ENCODE measurements at regions of chr10 and their contacts with region 1.

Region 1: DNA sequence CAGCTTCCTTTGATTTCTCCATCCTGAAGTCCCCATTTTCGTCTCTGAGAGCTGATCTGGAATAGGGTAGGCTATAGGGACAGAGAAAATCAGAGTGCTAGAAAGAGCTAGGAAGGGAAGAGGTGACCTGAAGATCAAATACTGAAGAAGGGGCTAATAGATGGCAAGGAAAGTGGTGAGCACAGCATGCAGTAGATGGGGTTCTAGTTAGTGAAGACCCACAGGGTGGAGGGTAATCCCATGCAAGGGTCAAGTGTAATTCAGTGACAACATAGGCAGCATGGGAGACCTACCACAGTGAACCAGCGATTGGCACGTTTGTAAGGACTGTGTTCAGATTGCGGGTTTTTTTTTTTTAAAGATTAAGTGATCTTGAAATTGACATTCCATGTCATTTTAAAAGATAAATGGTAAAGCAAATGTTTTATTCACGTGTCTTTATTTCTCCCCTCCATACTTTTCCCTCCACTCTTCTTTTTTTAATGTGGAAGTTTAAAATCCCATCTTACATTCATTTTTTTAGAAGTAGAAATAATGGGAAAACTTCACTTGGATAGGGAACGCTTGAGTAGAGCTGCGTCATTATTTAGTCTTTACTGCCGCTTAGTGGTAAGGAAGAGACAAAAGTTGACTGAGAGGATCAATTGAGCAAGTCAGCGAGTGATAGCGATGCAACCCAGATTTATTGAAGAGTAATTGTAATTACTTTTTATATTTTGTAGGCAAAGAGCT is 21.0 kb upstream of the ABI1 start:
- DNase-seq: no peak
- H3K4me3 ChIP-seq: no peak overlapping the region
- H3K27me3 ChIP-seq: no peaks in the 10 kb centered on the region
- CTCF ChIP-seq: peak; percentile 74

Region 2: DNA sequence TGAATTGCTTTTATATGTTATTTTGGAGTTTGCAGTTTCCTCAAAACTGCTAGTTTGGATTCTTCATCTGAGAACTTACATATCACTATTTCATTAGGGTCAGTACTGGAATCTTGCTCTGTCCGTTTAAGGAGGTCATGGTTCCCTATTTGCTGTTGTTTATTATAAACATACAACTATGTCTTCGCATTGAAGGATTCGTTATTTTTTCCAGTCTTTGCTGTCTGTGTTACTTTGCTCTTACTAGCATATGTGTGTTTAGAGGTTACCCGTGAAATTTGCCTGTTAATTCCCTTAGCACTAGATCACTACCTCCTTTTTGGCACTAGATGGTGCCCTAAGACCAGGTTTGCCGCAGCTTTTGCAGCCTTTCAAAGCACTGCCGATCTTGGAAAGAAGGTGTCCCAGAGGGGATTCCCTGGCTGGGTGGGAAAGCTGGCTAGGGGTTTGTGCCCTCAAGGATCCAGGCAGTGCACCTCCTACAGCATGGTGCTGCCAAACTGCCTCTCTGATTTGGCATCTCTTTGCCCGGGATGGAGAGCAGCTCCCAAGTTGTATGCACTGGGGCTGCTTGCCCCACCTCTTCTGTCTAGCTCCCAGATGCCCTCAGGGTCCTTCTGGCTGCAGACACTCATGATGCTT is 546.7 kb before region 1 on chr10:
- CTCF ChIA-PET with region 1: no interaction called
- POLR2A ChIA-PET with region 1: interaction called, 13 read pairs
- DNase-seq: peak; percentile 34
- H3K4me3 ChIP-seq: no peak overlapping the region
- H3K27me3 ChIP-seq: peaks cover 2% of the 10 kb centered on the region; the same call in 1 of the 2 replicates
- CTCF ChIP-seq: peak; percentile 72

Region 3: DNA sequence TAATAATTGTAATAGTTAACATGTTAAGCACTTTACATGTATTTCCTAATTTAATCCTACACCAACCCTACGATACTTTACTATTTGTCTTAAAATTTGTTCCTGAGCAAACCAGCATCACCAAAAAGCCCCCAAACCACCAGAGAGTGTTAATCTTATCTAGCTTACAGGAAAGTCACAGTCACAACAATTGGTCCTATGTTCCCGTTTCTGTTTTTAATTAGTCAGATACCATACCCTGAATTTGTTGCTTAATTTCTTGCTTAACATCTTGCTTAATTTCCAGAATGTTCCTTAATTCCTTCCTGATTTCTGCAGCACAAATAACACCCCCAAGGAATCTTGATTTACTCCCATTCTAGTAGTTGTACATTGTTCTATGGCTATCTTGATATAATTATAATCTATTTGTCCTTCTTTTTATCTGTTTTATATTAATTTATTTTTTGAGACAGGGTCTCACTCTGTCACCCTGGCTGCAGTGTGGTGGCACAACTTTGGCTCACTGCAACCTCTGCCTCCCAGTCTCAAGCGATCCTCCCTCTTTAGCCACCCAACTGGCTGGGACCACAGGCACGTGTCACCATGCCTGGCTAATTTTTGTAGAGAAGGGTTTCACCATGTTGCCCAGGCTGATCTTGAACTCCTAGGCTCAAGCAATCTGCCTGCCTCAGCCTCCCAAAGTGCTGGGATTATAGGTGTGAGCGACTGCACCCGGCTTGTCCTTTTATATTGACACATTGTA is 190.9 kb before region 1 on chr10:
- CTCF ChIA-PET with region 1: interaction called, 22 read pairs
- POLR2A ChIA-PET with region 1: interaction called, 10 read pairs
- DNase-seq: no peak
- H3K4me3 ChIP-seq: no peak overlapping the region
- H3K27me3 ChIP-seq: no peaks in the 10 kb centered on the region
- CTCF ChIP-seq: no peak

Region 4: DNA sequence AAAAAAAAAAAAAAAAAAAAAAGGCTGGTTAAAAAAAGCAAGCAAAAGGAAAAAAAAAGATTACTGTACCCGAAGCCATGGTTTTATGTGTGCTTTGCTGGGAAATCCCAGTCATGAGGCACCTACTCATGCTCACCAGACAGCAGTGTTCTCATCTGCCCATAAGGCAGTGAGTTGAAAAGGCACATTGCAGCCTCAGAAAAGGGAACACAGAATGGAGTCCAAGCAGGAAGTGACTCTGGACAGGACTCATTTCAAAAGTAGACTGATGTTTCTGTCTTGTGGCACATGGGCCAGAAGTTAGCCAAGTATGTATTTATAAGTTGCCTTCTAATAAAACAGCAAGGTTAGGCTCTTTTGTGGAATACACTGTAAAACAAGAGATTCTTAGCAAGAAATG is 144.0 kb before region 1 on chr10:
- CTCF ChIA-PET with region 1: interaction called, 15 read pairs
- POLR2A ChIA-PET with region 1: no interaction called
- DNase-seq: no peak
- H3K4me3 ChIP-seq: no peak overlapping the region
- H3K27me3 ChIP-seq: no peaks in the 10 kb centered on the region
- CTCF ChIP-seq: no peak

Region 5: GRCh38 chr10:26869528-26869927 is 12.2 kb before region 1 on chr10:
- CTCF ChIA-PET with region 1: interaction called, 11 read pairs
- POLR2A ChIA-PET with region 1: no interaction called
- DNase-seq: no peak
- H3K4me3 ChIP-seq: no peak overlapping the region
- H3K27me3 ChIP-seq: no peaks in the 10 kb centered on the region
- CTCF ChIP-seq: no peak

Measured in BJ (cell line).